Calu3 (cell line): ENCODE measurements at regions of chr16 and their contacts with region 1.

Region 1: DNA sequence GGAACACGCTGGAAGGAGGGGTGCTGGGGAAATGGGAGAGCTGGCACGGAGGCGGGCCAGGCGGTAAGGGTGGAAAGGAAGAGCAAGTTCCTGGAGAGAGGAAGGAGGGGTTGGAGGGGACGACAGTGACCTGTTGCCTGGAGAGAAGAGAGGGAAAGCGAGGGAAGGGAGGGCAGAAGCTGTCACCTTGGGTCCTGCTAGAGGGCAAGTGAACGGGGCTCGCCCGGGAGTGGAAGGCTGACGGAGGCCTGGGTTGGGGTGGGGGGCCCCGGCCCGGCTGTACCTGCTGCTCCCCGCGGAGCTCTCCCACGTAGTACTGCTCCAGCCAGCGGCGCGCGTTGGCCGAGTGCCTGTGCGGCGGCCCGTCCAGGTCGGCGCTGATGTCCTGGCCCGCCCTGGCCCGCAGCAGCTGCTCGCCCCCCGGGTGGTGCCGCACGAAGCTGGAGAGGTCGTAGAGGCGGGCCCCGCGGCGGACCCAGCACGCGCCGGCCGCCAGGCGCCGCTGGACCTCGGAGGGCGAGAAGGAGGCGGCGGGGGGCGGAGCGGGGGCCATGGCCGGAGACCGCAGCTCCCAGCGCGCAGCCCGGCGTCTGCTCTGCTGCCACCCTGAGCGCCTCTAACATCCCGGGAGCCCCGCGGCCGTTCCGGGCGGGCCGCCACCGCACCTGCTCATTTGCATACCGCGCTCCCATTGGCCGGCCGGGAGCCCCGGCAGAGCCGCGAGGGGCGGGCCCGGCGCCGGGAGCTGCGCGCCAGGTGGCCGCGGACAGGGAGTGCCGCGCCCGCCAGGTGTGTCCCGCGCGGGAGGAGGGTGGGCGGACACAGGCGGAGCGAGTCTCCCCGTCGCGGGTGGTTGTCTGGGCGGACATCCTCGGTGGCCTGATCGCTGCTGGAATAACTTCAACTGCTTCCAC is at the start of gene FA2H:
- DNase-seq: peak; percentile 99
- H3K4me3 Mint-ChIP-seq: peak within 1 kb of the TSS; percentile 86
- H3K27ac Mint-ChIP-seq: peak within 1 kb of the TSS; percentile 94
- H3K4me1 Mint-ChIP-seq: peaks cover 25% of the 10 kb centered on the region
- H3K27me3 Mint-ChIP-seq: no peaks in the 10 kb centered on the region
- CTCF ChIP-seq: peak; percentile 52
- total RNA-seq, gene FA2H: 74.2 and 122 TPM in 2 replicates

Region 2: DNA sequence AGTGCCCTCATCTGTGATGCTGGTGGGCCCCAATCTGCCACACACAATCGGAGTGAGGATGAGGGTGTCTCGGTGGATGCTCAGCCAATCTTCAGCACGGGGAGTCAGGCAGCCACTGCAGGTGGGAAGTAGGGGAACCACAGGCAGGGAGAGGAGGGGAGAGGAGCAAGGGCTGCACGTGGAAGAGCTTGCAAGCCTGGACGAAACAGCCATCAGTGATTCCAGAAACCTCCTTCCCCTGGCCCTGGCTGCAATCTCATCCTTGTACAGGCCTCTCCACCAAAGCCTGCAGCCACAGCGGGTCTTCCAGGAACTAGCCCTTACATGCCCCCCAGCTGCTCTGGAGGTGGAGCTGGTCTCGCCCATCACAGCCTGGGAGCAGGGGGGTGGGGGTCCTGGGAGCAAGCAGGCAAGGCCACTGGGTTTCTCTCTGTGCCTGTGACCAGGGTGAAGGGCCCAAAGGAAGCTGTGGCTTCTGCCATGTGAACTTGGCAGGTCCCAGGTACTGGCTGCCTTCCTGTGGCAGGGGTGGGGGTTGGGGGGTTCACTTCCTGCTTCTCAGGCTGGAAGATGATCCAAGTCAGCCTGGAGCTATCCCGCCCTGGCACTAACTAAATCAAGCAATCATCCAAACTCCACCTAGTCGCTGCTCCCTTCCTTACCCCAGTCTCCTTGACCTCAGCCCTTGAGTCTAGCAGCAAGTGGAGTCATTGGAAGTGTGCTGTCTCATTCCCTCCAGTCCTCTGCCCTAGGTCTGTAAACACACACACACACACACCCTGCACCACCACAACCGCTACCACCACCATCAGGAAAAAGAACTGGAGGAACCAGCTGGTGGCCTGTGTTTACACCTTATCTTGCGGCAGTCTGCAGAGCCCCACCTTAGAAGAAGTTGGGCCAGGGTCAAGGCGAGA is 44.4 kb before region 1 on chr16:
- CTCF ChIA-PET with region 1: interaction called, 10 read pairs
- intact Hi-C with region 1: loop called (anchors 1 kb)
- DNase-seq: peak; percentile 78
- H3K4me3 Mint-ChIP-seq: peak overlapping the region; percentile 11
- H3K27ac Mint-ChIP-seq: peak overlapping the region; percentile 18
- H3K4me1 Mint-ChIP-seq: peaks cover 27% of the 10 kb centered on the region
- H3K27me3 Mint-ChIP-seq: no peaks in the 10 kb centered on the region
- CTCF ChIP-seq: no peak

Region 3: GRCh38 chr16:74743668-74744299 is 30.7 kb before region 1 on chr16:
- CTCF ChIA-PET with region 1: interaction called, 10 read pairs
- intact Hi-C with region 1: loop called (anchors 1 kb)
- DNase-seq: peak; percentile 98
- H3K4me3 Mint-ChIP-seq: peak overlapping the region; percentile 60
- H3K27ac Mint-ChIP-seq: peak overlapping the region; percentile 96
- H3K4me1 Mint-ChIP-seq: peaks cover 65% of the 10 kb centered on the region
- H3K27me3 Mint-ChIP-seq: no peaks in the 10 kb centered on the region
- CTCF ChIP-seq: no peak

Region 4: GRCh38 chr16:74813109-74813641 is 38.7 kb after region 1 on chr16:
- CTCF ChIA-PET with region 1: interaction called, 10 read pairs
- intact Hi-C with region 1: loop called (anchors 5 kb)
- DNase-seq: peak; percentile 96
- H3K4me3 Mint-ChIP-seq: no peak overlapping the region
- H3K27ac Mint-ChIP-seq: peak overlapping the region; percentile 24
- H3K4me1 Mint-ChIP-seq: peaks cover 9% of the 10 kb centered on the region
- H3K27me3 Mint-ChIP-seq: peaks cover 30% of the 10 kb centered on the region
- CTCF ChIP-seq: peak; percentile 97

Region 5: GRCh38 chr16:74874912-74875546 is 100.6 kb after region 1 on chr16:
- CTCF ChIA-PET with region 1: no interaction called
- intact Hi-C with region 1: no loop called
- DNase-seq: peak; percentile 48
- H3K4me3 Mint-ChIP-seq: peak overlapping the region; percentile 8
- H3K27ac Mint-ChIP-seq: peak overlapping the region; percentile 7
- H3K4me1 Mint-ChIP-seq: peaks cover 16% of the 10 kb centered on the region
- H3K27me3 Mint-ChIP-seq: no peaks in the 10 kb centered on the region
- CTCF ChIP-seq: no peak